ENCODE measurements at regions of chr13 and their contacts with region 1.

Region 1: GRCh38 chr13:94583926-94584325 is 12.0 kb downstream of the TGDS start:
- DNase-seq: no peak
- ATAC-seq: no peak
- H3K4me3 ChIP-seq: no peak overlapping the region
- H3K27ac ChIP-seq: no peak overlapping the region
- H3K4me1 ChIP-seq: no peaks in the 10 kb centered on the region
- H3K27me3 ChIP-seq: no peaks in the 10 kb centered on the region

Region 2: DNA sequence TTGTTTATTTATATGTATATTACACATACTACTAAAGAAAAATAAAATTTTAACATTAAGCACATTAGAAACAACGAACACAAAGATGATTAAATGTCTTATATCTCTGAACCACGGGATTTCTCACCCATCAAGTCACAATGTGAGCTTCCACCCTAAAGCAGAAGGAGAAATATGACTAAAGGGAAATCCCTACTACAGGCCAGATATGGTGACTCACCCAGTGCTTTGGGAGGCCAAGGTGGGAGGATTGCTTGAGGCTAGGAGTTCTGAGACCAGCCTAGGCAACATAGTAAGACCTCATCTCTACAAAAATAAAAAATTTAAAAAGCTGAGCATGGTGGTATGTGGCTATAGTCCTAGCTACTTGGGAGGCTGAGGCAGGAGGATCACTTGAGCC is 129.0 kb before region 1 on chr13:
- intact Hi-C with region 1: no loop called
- DNase-seq: no peak
- ATAC-seq: no peak
- H3K4me3 ChIP-seq: no peak overlapping the region
- H3K27ac ChIP-seq: no peak overlapping the region
- H3K4me1 ChIP-seq: no peaks in the 10 kb centered on the region
- H3K27me3 ChIP-seq: no peaks in the 10 kb centered on the region

Region 3: DNA sequence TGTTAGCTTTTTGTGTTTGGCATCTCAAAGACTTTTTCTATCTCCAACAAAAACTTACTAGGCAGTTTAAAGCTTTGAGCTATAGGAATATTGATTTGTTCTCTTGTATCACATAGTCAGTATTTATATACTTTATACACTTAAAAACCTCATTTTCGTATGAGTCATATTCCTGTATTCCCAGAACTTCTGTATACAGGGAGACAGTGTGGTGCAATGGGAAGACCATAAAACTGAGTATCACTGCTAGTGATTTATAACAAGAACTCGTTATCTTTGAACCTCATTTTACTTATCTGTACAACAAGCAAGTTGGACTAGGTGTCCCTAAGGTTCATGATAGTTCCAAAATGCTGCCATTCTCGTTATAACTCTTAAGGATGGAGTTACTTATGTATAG is 24.0 kb after region 1 on chr13:
- intact Hi-C with region 1: loop called in 1 of 2 experiments (anchors 2 kb)
- DNase-seq: no peak
- ATAC-seq: no peak
- H3K4me3 ChIP-seq: no peak overlapping the region
- H3K27ac ChIP-seq: no peak overlapping the region
- H3K4me1 ChIP-seq: no peaks in the 10 kb centered on the region
- H3K27me3 ChIP-seq: no peaks in the 10 kb centered on the region

Measured in aorta (tissue), 5 donors.